Right ventricle myocardium inferior (tissue), 1 donor: ENCODE measurements at regions of chr14 and their contacts with region 1.

Region 1: DNA sequence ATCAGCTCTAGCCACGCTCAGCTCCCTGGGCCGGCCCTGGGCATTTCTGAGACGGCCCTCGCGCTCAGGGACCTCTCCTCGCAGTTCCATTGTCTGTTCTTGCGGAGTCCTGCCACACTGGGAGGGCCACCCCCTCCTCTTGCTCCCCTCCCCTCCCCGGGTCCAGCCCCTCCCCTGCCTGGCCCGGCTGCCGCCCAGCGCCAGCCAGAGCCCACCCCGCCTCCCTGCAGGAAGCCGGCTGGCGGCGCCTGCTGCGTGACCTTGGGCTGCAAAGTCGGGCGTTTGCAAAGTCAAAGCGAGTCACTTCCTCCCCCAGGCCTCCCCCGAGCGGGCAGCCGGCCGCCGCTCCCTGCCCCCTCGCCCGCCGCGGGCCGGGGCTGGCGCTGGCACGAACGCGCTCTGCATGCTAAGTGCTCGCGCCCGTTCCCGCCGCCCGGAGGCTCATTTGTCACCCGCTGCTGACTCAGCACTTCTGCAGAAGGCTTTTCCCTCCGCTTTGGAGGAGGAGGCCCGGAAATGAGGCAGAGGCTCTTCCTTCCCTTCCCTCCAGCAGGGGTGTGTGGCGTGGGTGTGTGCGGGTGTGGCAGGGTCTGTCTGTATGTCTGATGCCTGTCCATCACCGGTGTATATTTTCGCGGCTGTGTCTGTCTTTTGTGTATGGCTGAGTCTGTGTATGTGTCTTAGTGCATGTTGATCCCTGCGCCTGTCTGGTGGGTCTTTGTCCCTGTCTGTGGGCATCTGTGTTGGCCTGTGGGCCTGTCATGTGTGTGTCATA is 72.0 kb downstream of the IRF2BPL start:
- DNase-seq: peak; percentile 95
- ATAC-seq: peak; percentile 85

Region 2: GRCh38 chr14:77040059-77040740 is 83.7 kb after region 1 on chr14:
- intact Hi-C with region 1: loop called (anchors 5 kb)
- DNase-seq: peak; percentile 100
- ATAC-seq: peak; percentile 85